MCF 10A (cell line): ENCODE measurements at regions of chr22 and their contacts with region 1.

Region 1: DNA sequence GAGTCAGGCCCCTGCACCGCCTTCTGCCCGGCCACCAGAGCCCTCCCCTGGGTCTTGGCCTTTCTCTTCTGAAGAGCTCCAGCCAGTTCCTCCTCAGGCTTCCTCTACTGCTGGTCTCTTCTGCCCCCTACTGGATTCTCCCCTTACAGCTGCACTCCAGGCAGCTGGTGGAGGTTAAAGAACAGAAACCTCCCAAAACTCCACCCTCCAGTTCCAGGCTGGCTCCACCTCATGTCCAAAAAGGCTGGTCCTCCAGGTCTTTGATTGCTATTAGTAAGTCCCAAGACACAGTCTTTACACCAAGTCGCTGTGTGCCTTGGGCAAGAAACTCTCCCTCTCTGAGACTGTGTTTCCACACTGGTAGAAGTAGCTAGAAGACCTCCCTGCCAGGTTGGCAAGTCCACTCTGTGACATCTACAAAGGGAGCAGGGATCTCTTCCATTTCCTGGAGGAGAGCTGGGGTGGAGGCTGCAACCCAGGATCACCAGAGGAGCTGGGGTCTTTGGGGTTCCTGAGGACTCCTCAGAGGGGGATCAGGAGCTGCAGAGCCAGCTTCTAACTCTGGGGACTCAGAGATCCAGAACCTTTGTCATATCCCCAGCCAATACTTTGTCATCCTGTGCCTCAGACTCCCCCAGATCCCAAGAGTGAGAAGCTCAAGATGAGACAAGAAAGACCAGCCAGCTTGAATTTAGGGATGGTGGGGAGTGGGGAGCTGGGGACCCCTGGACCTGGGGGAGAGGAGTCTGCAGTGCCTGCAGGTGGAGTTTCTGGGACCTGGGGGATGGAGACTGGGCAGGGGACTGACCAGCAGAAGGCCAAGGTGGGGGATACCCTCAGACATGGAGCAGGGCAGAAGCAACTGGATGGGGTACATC is 3.4 kb upstream of the IGLL5 start:
- DNase-seq: peak; percentile 74
- H3K4me3 Mint-ChIP-seq: no peak overlapping the region
- H3K27ac Mint-ChIP-seq: no peak overlapping the region
- H3K4me1 Mint-ChIP-seq: no peaks in the 10 kb centered on the region
- H3K27me3 Mint-ChIP-seq: peaks cover 52% of the 10 kb centered on the region
- CTCF ChIP-seq: peak; percentile 62

Region 2: DNA sequence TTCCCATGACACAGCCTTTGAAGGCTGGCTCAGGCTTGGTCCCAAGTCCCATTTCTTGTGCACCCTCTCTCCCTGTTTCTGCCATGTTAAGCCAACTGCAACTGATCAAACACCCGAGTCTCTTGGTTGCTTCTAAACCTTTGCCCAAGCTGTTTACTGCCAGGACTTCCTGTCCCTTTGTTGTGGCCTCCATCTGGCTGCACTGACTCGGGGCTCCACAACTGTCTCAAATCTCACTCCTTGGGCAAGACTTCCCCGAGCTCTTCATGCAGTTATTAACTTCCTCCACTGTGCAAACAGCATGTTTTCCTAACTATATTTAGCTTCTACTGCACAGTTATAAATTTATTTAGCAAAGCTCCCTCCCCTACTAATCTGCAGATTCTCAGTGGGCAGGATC is 635.4 kb before region 1 on chr22:
- CTCF ChIA-PET with region 1: no interaction called
- POLR2A ChIA-PET with region 1: no interaction called
- intact Hi-C with region 1: no loop called
- DNase-seq: no peak
- H3K4me3 Mint-ChIP-seq: no peak overlapping the region
- H3K27ac Mint-ChIP-seq: no peak overlapping the region
- H3K4me1 Mint-ChIP-seq: no peaks in the 10 kb centered on the region
- H3K27me3 Mint-ChIP-seq: peaks cover 13% of the 10 kb centered on the region
- CTCF ChIP-seq: no peak

Region 3: DNA sequence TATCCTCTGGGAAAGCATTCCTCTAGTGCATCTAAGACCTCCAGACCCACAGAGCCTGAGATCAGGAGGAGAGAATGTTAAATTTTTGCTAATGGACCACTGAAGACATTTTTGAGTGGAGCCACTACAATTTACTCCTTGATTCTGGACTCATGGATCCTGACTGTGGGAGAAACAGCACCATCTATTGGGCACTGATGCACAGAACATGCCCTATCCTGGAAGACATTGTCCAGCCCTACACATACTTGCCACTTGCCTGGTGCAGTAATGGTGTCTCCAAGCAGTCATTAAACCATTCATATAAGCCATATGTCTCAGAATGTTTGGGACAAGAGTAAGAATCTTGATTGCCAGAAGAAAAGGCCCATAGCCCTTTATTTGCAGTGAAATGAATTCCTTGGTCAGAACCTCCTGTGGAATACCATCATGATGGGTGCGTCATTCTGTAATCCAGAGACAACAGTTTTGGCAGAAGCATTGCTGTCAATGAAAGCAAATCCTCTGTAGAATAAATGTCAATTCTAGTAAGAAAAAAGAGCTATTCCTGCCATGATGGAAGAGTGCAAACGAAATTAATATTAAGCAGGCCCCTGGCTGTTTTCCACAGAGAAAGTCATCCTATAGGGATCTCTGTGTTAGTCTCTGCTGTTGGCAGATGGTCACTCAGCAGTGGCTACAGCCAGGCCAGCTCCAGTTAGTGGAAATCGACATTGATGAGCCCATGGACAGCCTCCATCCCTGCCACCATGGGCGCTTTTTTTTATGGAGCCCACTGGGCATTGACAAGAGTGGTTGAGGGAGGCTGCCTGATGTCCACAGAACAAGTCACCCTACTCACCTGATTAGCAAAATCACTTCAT is 196.4 kb before region 1 on chr22:
- CTCF ChIA-PET with region 1: no interaction called
- POLR2A ChIA-PET with region 1: no interaction called
- intact Hi-C with region 1: no loop called
- DNase-seq: peak; percentile 63
- H3K4me3 Mint-ChIP-seq: no peak overlapping the region
- H3K27ac Mint-ChIP-seq: no peak overlapping the region
- H3K4me1 Mint-ChIP-seq: peaks cover 11% of the 10 kb centered on the region
- H3K27me3 Mint-ChIP-seq: no peaks in the 10 kb centered on the region
- CTCF ChIP-seq: peak; percentile 71

Region 4: DNA sequence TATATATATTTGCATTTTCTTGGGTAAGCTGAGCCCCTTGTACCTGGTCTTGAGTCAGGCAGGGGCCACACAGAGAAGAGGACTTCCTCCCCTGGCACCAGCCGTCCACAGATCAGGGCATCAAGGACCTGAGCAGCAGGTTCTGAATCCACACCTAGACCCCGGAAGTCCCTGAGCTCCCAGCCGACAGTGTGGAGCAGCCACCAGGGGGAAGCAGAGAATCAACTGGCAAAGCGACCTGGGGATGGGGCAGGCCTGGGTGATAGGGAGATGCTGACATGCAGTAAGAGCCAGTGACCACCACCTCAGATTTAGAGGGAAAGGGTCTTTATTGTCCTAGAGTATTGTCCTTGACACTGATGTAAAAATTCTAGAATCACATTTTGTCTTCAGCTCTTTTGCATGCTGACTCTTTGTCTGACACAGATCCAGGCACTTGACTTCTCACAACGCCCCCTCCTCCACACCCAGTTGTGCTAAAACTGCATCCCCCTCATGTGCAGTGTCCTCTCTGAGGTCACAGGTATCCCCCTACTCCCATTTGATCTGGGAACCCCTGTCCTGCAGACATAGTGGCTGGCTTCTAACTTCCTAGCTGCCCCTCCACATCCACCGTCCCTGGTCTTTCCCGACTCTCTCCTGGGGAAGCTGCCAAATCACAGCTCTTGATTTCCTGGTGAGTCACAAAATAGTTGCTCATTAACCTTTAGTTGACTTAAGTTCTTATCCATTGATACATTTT is 130.6 kb before region 1 on chr22:
- CTCF ChIA-PET with region 1: interaction called, 12 read pairs
- POLR2A ChIA-PET with region 1: interaction called, 3 read pairs
- intact Hi-C with region 1: no loop called
- DNase-seq: peak; percentile 72
- H3K4me3 Mint-ChIP-seq: no peak overlapping the region
- H3K27ac Mint-ChIP-seq: no peak overlapping the region
- H3K4me1 Mint-ChIP-seq: peaks cover 27% of the 10 kb centered on the region
- H3K27me3 Mint-ChIP-seq: no peaks in the 10 kb centered on the region
- CTCF ChIP-seq: peak; percentile 69

Region 5: GRCh38 chr22:22770280-22770871 is 113.9 kb before region 1 on chr22:
- CTCF ChIA-PET with region 1: interaction called, 17 read pairs
- POLR2A ChIA-PET with region 1: no interaction called
- intact Hi-C with region 1: no loop called
- DNase-seq: peak; percentile 69
- H3K4me3 Mint-ChIP-seq: no peak overlapping the region
- H3K27ac Mint-ChIP-seq: no peak overlapping the region
- H3K4me1 Mint-ChIP-seq: no peaks in the 10 kb centered on the region
- H3K27me3 Mint-ChIP-seq: peaks cover 96% of the 10 kb centered on the region
- CTCF ChIP-seq: peak; percentile 86

Region 6: DNA sequence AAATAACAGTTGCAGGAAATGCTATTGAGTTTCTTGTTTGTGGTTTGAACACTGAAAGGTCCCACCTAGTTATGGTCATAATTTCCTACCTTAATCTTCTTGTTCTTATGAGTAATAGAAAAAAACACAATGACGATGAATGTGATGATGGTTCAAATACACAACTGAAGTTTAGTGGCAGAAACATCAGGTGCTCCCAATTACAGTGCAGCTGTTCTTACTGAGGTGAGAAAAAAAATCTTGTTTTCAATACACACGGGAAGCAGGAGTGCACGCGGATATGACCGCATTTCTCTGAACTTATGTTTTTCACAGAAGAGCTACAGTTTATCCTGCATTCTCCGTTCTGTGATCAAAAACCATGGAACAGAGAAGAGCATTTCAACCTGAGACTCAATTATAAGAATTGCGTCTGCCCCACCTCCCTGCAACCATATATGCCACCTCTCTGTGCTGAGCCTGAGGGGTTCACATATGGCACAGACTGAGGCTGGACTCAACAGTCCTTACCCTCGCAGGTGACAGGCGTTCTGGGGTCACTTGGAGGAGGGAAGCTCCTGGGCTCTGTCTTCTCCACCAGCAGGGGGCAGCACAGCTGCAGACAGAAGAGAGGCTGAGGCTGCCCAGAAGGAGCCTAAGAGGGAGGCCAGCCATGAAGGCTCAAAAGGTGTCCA is 96.3 kb before region 1 on chr22:
- CTCF ChIA-PET with region 1: interaction called, 15 read pairs
- POLR2A ChIA-PET with region 1: no interaction called
- intact Hi-C with region 1: no loop called
- DNase-seq: peak; percentile 68
- H3K4me3 Mint-ChIP-seq: no peak overlapping the region
- H3K27ac Mint-ChIP-seq: no peak overlapping the region
- H3K4me1 Mint-ChIP-seq: no peaks in the 10 kb centered on the region
- H3K27me3 Mint-ChIP-seq: peaks cover 28% of the 10 kb centered on the region
- CTCF ChIP-seq: peak; percentile 79

Region 7: GRCh38 chr22:22848364-22848866 is 35.8 kb before region 1 on chr22:
- CTCF ChIA-PET with region 1: interaction called, 16 read pairs
- POLR2A ChIA-PET with region 1: interaction called, 3 read pairs
- intact Hi-C with region 1: no loop called
- DNase-seq: peak; percentile 69
- H3K4me3 Mint-ChIP-seq: no peak overlapping the region
- H3K27ac Mint-ChIP-seq: no peak overlapping the region
- H3K4me1 Mint-ChIP-seq: no peaks in the 10 kb centered on the region
- H3K27me3 Mint-ChIP-seq: peaks cover 73% of the 10 kb centered on the region
- CTCF ChIP-seq: peak; percentile 75

Region 8: DNA sequence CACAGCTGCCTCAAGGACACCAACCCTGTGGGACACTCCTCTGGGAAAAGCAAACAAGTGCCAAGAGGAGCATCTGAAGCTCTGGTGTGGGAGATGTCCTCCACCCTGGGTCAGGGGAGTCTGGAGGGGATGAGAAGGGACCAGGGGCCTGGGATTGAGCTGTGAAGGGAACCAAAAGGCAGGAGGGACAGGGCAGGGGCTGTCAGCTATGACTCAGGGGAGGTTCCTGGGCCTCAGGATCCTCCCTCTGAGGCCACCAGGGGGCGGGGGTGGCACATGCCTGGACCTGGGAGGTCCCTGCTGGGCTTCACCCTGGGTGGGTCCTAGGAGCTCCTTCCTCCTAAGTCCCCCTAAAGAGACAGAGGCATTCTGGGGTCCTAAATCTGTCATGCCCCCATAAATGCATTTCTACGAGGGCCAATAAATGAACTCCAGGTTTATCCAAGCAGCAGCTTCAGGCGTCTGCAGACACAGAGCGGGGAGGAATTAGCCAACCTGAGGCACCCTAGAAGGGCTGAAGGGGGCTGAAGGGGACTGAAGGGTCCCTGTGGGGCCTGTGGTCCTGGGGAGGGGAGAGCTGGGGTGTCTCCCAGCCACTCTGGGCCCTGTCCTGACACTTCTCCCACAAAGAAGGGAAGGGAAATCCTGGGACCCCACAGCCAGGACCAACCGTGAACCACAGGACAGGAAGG is 28.5 kb before region 1 on chr22:
- CTCF ChIA-PET with region 1: interaction called, 8 read pairs
- POLR2A ChIA-PET with region 1: no interaction called
- intact Hi-C with region 1: loop called (anchors 1 kb)
- DNase-seq: peak; percentile 34
- H3K4me3 Mint-ChIP-seq: no peak overlapping the region
- H3K27ac Mint-ChIP-seq: no peak overlapping the region
- H3K4me1 Mint-ChIP-seq: no peaks in the 10 kb centered on the region
- H3K27me3 Mint-ChIP-seq: peaks cover 70% of the 10 kb centered on the region
- CTCF ChIP-seq: peak; percentile 36

Region 9: DNA sequence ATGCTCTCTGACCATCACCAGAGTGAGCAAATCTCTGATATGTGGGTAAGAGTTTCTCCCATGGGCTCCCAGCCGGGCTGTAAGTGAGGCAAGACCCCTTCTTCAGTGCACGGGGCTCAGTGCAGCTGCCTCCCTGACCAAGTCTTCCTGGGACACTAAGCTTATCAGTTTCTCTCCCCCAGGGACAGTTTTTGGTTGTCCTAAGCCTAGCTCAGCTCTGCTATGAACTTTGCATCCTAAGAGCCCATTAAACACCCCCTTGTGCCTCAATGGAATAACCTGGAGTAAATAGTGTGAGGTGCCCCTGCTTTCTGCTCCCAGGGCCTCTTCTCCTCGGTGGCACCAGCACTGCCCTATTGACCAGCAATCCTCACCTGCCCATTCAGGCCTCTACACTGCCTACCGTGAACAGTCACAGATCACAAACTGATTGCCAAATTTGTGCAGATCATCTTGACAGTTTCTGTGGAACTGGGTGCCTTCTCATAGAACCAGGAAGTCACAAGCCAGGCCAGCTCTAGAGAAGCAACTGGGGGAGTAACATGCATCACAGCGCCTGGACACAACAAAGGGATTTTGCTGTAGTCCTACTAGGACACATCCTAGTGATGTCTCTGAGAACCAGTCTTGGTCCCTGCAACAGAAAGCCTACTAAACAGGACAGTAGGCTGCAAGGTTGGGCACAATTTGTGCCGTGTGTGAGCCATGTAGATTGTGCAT is 16.1 kb before region 1 on chr22:
- CTCF ChIA-PET with region 1: no interaction called
- POLR2A ChIA-PET with region 1: no interaction called
- intact Hi-C with region 1: no loop called
- DNase-seq: no peak
- H3K4me3 Mint-ChIP-seq: no peak overlapping the region
- H3K27ac Mint-ChIP-seq: no peak overlapping the region
- H3K4me1 Mint-ChIP-seq: no peaks in the 10 kb centered on the region
- H3K27me3 Mint-ChIP-seq: peaks cover 77% of the 10 kb centered on the region
- CTCF ChIP-seq: no peak